Kidney (tissue), 22 donors: ENCODE measurements at regions of chr15 and their contacts with region 1.

Region 1: GRCh38 chr15:57146506-57147201 is 228.2 kb downstream of the TCF12 start:
- DNase-seq: peak in 2 of 5 donors; percentile 77 to 86
- H3K4me3 ChIP-seq: peak overlapping the region in 2 of 3 donors; percentile 13 to 21
- H3K27ac ChIP-seq: no peak overlapping the region
- H3K4me1 ChIP-seq: peaks cover 0 to 7% (median 5%) of the 10 kb centered on the region in 3 donors
- H3K27me3 ChIP-seq: no peaks in the 10 kb centered on the region
- CTCF ChIP-seq: peak; percentile 69

Region 2: GRCh38 chr15:57306161-57306943 is 159.7 kb after region 1 on chr15:
- intact Hi-C with region 1: loop called (anchors 10 kb)
- DNase-seq: peak; percentile 79 to 92 (median 89)
- H3K4me3 ChIP-seq: peak overlapping the region; percentile 18 to 53 (median 49)
- H3K27ac ChIP-seq: no peak overlapping the region
- H3K4me1 ChIP-seq: peaks cover 0 to 2% (median 0%) of the 10 kb centered on the region in 3 donors
- H3K27me3 ChIP-seq: no peaks in the 10 kb centered on the region
- CTCF ChIP-seq: peak; percentile 82